CD8-positive, alpha-beta T cell (primary cell): ENCODE measurements at regions of chr3 and their contacts with region 1.

Region 1: DNA sequence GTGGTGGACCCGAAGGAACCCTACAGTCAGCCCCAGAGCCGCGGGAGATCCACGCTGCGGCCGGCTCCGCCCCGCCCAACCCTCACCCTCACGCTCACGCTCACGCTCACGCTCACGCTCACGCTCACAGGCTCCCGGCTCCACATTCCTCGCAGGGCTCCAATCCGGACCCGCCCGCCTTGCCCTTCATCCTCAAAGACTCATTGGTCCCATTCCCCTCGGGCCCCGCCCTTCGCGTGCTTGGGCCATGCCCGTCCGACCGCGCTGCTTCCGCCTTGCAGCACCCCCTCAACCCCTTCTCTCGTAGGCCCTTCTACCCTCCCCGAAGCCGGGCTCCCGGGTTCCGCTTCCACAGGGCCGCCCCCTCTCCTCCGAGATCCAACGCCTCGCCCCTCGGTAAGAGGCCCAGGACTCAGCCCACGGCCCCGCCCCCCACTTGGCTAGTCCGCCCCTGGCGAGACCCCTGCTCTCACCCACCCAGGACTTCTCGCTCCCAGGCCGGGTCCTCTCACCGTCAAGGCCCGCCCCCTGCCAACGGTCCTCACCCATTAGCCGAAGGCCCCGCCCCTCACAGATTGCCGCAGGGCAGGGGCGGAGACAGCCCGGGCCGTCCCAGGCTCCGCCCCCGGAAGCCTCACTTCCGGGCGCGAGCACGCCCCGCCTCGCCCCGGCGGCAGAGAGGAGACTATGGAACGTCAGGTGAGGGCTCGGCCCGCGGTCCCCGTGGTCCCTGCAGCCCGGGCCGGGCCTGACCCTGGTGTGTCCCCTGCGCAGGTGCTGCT is at the start of gene APEH:
- DNase-seq: peak; percentile 92 to 99 (median 97)
- ATAC-seq: peak; percentile 85
- H3K4me3 ChIP-seq: peak within 1 kb of the TSS; percentile 78 to 92
- H3K4me3 Mint-ChIP-seq: peak within 1 kb of the TSS; percentile 95
- H3K27ac ChIP-seq: peak within 1 kb of the TSS; percentile 86 to 98
- H3K27ac Mint-ChIP-seq: peak within 1 kb of the TSS; percentile 97
- H3K4me1 ChIP-seq: peaks cover 20% of the 10 kb centered on the region
- H3K4me1 Mint-ChIP-seq: peaks cover 36% of the 10 kb centered on the region
- H3K27me3 ChIP-seq: no peaks in the 10 kb centered on the region
- H3K27me3 Mint-ChIP-seq: no peaks in the 10 kb centered on the region
- CTCF ChIP-seq: no peak
- total RNA-seq, gene APEH: 40.8 to 48.9 TPM

Region 2: GRCh38 chr3:48952510-48953118 is 721.3 kb before region 1 on chr3:
- CTCF ChIA-PET with region 1: no interaction called
- POLR2A ChIA-PET with region 1: no interaction called
- intact Hi-C with region 1: no loop called
- DNase-seq: peak; percentile 22 to 75 (median 61)
- ATAC-seq: peak; percentile 84
- H3K4me3 ChIP-seq: no peak overlapping the region
- H3K4me3 Mint-ChIP-seq: no peak overlapping the region
- H3K27ac ChIP-seq: peak overlapping the region in 1 of 2 experiments; percentile 28
- H3K27ac Mint-ChIP-seq: peak overlapping the region; percentile 7
- H3K4me1 ChIP-seq: no peaks in the 10 kb centered on the region
- H3K4me1 Mint-ChIP-seq: peaks cover 22% of the 10 kb centered on the region
- H3K27me3 ChIP-seq: no peaks in the 10 kb centered on the region
- H3K27me3 Mint-ChIP-seq: no peaks in the 10 kb centered on the region
- CTCF ChIP-seq: peak; percentile 50

Region 3: DNA sequence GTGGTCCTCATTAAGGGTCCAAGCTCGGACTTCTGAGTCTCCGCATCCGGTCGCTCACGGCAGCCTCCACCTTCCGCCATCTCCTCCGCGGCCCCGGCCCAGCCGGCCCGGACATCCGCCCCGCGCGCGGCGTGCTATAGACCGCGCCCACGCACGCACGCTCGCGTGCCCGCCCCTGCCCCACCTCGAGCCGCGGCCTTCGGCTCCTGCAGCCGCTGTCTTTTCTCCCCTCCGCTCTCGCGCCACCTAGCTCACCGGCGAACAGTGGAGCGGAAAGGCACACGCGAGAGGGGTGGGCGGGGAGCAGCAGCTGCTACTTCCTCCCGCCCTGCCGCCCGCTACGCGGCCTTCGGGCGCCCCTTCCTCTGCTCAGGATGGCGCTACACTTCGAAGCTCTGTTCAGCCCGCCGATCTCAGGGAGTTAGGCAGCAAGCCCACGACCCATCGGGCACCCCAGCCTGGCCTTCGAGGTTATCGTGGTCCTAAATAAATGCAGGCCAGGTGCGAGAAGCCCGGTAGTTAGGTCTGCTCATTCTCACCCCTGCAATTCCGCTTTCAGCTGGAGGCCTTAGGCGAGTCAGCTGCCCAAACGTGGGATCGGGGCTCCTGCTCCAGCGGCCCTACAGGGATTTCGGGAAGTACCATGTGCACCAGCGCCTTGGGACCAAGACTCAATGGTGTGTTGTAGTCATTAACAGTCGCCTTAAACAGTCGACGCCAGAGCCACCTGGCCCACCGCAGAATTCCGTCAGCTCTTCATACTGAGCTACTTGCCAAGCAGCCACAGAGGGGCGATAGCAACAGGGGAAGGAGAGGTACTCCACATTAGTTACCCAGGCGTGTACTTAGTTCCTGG is 333.7 kb before region 1 on chr3 and contains the start of gene USP4:
- CTCF ChIA-PET with region 1: interaction called, 4 read pairs
- POLR2A ChIA-PET with region 1: no interaction called
- intact Hi-C with region 1: loop called in 1 of 2 experiments (anchors 5 kb)
- DNase-seq: peak; percentile 79 to 97 (median 90)
- ATAC-seq: peak; percentile 85
- H3K4me3 ChIP-seq: peak within 1 kb of the TSS; percentile 78 to 89
- H3K4me3 Mint-ChIP-seq: peak within 1 kb of the TSS; percentile 93
- H3K27ac ChIP-seq: peak within 1 kb of the TSS; percentile 98
- H3K27ac Mint-ChIP-seq: peak within 1 kb of the TSS; percentile 96
- H3K4me1 ChIP-seq: peaks cover 40% of the 10 kb centered on the region
- H3K4me1 Mint-ChIP-seq: peaks cover 48% of the 10 kb centered on the region
- H3K27me3 ChIP-seq: no peaks in the 10 kb centered on the region
- H3K27me3 Mint-ChIP-seq: no peaks in the 10 kb centered on the region
- CTCF ChIP-seq: peak; percentile 36
- total RNA-seq, gene USP4: 78.0 to 92.4 TPM

Region 4: GRCh38 chr3:49539659-49540560 is 134.0 kb before region 1 on chr3:
- CTCF ChIA-PET with region 1: interaction called, 226 read pairs
- POLR2A ChIA-PET with region 1: interaction called, 20 read pairs
- intact Hi-C with region 1: loop called (anchors 1 kb)
- DNase-seq: peak; percentile 83 to 97 (median 92)
- ATAC-seq: peak; percentile 96
- H3K4me3 ChIP-seq: peak overlapping the region; percentile 65 to 71
- H3K4me3 Mint-ChIP-seq: peak overlapping the region; percentile 82
- H3K27ac ChIP-seq: peak overlapping the region; percentile 46 to 67
- H3K27ac Mint-ChIP-seq: peak overlapping the region; percentile 32
- H3K4me1 ChIP-seq: peaks cover 4% of the 10 kb centered on the region
- H3K4me1 Mint-ChIP-seq: peaks cover 2% of the 10 kb centered on the region
- H3K27me3 ChIP-seq: no peaks in the 10 kb centered on the region
- H3K27me3 Mint-ChIP-seq: peaks cover 10% of the 10 kb centered on the region
- CTCF ChIP-seq: peak; percentile 76

Region 5: DNA sequence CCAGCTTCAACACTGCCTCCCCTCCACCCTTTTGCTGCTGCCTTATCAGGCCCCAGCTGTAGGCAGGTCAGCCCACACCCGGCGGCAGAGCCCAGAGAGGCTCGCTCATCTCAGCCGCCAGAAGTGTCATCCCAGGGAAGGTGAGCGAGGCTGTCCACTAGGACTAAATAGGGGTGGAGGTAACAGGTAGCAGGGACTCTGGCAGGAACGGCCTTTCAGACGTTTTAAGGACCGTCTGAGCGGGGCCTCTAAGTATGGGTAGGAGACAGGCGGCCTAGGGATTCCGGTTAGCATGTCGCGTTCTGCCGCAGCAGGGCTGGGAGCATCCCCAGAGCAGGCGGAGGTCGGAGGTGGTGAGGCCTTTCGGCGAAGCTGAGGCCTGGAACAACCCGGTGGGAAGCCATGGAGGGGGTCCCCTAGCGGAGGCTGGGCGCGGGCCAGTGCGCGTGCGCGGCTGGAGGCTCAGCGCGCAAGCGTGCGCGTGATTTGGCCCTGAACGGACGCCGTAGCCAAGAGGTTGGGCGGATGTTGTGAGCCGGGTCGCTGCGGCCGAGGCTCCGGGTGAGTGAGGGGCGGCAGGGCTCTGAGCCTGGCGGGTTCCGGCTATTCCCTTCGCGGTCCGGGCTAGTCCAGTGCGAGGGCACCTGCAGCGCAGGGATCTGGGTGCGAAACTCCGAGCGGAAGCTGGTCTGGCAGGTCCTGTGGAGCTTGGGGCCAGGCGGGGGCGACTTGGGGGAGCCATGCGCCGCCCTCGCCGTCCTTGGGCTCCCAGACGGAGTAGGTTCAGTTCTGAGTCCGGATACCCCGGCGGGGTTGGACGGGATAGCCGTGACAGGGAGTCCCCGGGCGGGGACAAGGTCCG is 15.4 kb after region 1 on chr3 and contains the starts of genes MST1 and RNF123:
- CTCF ChIA-PET with region 1: interaction called, 4 read pairs
- POLR2A ChIA-PET with region 1: no interaction called
- intact Hi-C with region 1: loop called (anchors 1 kb)
- DNase-seq: peak; percentile 81 to 97 (median 92)
- ATAC-seq: peak; percentile 84
- H3K4me3 ChIP-seq: peak within 1 kb of the TSS; percentile 96 to 99
- H3K4me3 Mint-ChIP-seq: peak within 1 kb of the TSS; percentile 95
- H3K27ac ChIP-seq: peak within 1 kb of the TSS; percentile 73 to 78
- H3K27ac Mint-ChIP-seq: peak within 1 kb of the TSS; percentile 95
- H3K4me1 ChIP-seq: peaks cover 22% of the 10 kb centered on the region
- H3K4me1 Mint-ChIP-seq: peaks cover 45% of the 10 kb centered on the region
- H3K27me3 ChIP-seq: peaks cover 0 to 8% of the 10 kb centered on the region in 2 experiments
- H3K27me3 Mint-ChIP-seq: no peaks in the 10 kb centered on the region
- CTCF ChIP-seq: no peak
- total RNA-seq, gene MST1: 8.6 to 9.1 TPM
- total RNA-seq, gene RNF123: 23.7 to 27.0 TPM

Region 6: DNA sequence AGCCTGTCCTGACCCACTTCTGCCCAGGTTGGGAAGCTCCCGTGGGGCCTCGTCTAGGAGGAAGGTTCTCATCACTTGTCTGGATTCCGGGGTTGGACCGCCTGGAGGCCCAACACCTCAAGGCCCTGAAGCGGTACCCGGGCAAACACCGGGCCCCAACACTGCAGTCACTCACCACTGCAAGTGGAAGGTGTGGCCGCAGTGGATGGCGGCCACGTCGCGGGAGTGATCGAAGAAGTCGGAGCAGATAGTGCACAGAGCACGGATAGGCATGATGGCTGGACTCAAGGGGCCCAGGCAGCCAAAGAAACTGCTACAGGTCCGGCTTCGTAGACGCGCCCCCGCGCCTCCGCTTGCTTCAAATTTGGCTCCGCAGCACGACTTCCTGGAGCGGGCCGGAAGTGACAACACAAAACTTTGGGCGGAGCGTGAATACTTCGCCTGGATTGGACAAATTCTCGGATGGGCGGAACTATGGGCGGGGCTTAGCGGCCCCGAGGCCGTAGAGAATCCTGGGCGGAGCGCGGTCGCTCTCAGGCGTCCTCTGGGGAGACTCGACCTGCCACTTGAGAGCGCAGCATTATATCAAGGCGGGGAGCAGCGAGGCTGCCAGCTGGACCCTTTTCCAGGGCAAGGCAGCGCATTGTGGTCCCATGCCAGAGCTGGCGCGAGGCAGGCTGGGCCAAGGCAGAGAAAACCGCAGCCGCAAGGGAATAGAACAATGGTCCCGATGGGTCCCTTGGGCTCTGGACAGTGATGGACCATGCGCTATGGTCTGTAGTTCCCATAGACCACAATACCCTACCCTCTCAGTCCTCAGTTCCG is 182.5 kb after region 1 on chr3 and contains the start of gene TRAIP:
- CTCF ChIA-PET with region 1: no interaction called
- POLR2A ChIA-PET with region 1: no interaction called
- intact Hi-C with region 1: loop called in 1 of 2 experiments (anchors 1 kb)
- DNase-seq: peak; percentile 86 to 97 (median 94)
- ATAC-seq: peak; percentile 99
- H3K4me3 ChIP-seq: peak within 1 kb of the TSS; percentile 58 to 79
- H3K4me3 Mint-ChIP-seq: peak within 1 kb of the TSS; percentile 84
- H3K27ac ChIP-seq: peak within 1 kb of the TSS; percentile 67 to 84
- H3K27ac Mint-ChIP-seq: peak within 1 kb of the TSS; percentile 86
- H3K4me1 ChIP-seq: peaks cover 14% of the 10 kb centered on the region
- H3K4me1 Mint-ChIP-seq: peaks cover 15% of the 10 kb centered on the region
- H3K27me3 ChIP-seq: no peaks in the 10 kb centered on the region
- H3K27me3 Mint-ChIP-seq: no peaks in the 10 kb centered on the region
- CTCF ChIP-seq: no peak
- total RNA-seq, gene TRAIP: 4.1 to 5.5 TPM